ENCODE measurements at regions of chr6 and their contacts with region 1.

Region 1: GRCh38 chr6:153231048-153231646 is 100.1 kb upstream of the RGS17 start:
- DNase-seq: peak; percentile 26 to 42 (median 28)
- ATAC-seq: no peak
- H3K4me3 ChIP-seq: no peak overlapping the region
- H3K27ac ChIP-seq: no peak overlapping the region
- H3K4me1 ChIP-seq: no peaks in the 10 kb centered on the region
- H3K27me3 ChIP-seq: no peaks in the 10 kb centered on the region
- CTCF ChIP-seq: peak; percentile 54 to 82 (median 70)
- POLR2A ChIP-seq: no peak

Region 2: DNA sequence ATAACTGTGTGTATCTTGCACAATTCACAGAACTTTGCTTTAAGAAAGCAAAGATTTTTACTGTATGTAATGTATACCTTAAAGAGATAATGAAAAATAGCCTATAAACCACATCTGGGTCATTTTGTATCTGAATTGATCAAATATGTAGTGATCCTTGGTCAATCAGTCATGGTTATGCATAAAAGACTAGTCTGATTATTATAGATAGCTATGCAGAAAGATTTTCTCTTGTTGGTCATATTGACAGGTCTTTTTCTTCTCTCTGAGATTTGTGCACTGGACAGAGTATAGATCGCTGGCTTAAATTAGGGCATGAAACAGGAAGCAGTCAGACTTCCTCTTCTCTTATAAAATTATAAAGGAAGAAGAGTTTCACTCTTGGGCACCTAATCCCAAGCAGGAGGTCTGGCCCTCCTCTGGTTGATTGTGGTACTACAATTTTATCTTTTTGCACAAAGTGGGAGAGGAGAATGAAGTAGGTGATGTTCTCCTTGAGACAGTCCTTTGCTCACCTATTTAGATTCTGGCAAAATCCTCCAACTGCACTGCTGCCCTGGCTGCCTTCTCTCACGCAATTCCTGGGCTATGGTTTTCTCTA is 280.8 kb after region 1 on chr6:
- intact Hi-C with region 1: loop called in 4 of 10 experiments (anchors 5 to 10 kb)
- DNase-seq: no peak
- ATAC-seq: peak in 2 of 4 donors; percentile 16 to 43
- H3K4me3 ChIP-seq: no peak overlapping the region
- H3K27ac ChIP-seq: no peak overlapping the region
- H3K4me1 ChIP-seq: no peaks in the 10 kb centered on the region
- H3K27me3 ChIP-seq: no peaks in the 10 kb centered on the region
- CTCF ChIP-seq: peak; percentile 50 to 72 (median 62)
- POLR2A ChIP-seq: no peak

Region 3: DNA sequence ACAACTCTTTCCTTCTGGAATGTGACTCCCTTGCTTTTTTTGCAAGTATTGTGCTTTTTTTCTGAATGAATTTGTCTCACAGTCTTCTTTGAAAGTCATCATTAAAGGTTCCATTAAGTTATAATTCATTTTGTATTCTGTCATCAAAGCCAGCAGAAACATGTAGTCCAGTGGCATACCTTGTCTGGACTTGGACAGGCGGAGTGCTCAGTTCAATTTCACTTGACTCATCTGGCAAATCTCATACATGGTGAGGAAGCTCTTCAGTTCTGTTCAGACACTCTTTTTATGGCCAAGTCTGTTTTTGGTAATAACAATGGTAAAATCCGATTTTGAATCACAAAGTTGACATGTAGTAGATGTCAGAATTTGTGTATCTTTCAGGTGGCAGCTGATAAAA is 547.1 kb after region 1 on chr6:
- intact Hi-C with region 1: loop called in 1 of 10 experiments (anchors 10 kb)
- DNase-seq: no peak
- ATAC-seq: no peak
- H3K4me3 ChIP-seq: no peak overlapping the region
- H3K27ac ChIP-seq: no peak overlapping the region
- H3K4me1 ChIP-seq: no peaks in the 10 kb centered on the region
- H3K27me3 ChIP-seq: no peaks in the 10 kb centered on the region
- CTCF ChIP-seq: no peak
- POLR2A ChIP-seq: no peak

Region 4: GRCh38 chr6:153947808-153948447 is 716.8 kb after region 1 on chr6:
- intact Hi-C with region 1: loop called (anchors 2 to 10 kb)
- DNase-seq: peak in 1 of 5 donors; percentile 6
- ATAC-seq: no peak
- H3K4me3 ChIP-seq: no peak overlapping the region
- H3K27ac ChIP-seq: no peak overlapping the region
- H3K4me1 ChIP-seq: no peaks in the 10 kb centered on the region
- H3K27me3 ChIP-seq: no peaks in the 10 kb centered on the region
- CTCF ChIP-seq: peak; percentile 53 to 91 (median 77)
- POLR2A ChIP-seq: no peak